Esophagus muscularis mucosa (tissue), 4 donors: ENCODE measurements at regions of chr16 and their contacts with region 1.

Region 1: DNA sequence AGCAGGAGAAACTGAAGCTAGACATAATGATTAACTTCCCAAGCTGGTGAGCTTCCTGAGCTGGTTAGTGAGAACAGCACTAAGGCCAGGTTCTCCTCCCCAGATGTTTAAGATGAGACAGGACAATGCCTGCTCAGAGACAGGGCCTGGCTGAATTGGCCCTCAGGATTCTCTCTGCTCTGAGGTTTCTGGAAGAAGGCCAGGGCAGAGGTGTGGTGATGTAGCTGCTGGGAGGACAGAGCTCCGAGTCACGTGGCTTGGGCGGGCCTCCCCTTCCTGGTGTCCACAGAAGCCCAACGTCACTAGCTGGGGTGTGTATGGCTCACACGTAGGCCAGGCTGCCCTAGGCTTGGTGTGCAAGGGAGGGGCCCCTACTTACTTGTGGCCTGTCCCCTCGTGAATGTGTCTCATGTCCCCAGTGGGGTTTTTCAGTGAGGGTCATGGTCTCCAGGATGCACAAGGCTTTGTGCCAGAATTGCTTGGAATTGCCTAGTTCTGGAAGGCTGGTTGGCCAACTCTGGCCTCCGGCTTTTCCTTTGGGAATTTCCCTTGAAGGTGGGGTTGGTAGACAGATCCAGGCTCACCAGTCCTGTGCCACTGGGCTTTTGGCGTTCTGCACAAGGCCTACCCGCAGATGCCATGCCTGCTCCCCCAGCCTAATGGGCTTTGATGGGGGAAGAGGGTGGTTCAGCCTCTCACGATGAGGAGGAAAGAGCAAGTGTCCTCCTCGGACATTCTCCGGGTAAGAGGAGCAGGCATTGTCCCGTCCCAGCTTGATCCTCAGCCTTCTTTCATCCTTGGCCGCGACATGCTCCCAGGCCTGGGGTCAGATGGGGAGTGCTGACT is 3.4 kb downstream of the NOD2 start:
- DNase-seq: peak; percentile 95
- H3K4me3 ChIP-seq: no peak overlapping the region
- H3K27ac ChIP-seq: peak overlapping the region; percentile 59 to 69 (median 62)
- H3K4me1 ChIP-seq: peaks cover 28 to 46% (median 43%) of the 10 kb centered on the region in 4 donors
- H3K27me3 ChIP-seq: no peaks in the 10 kb centered on the region
- CTCF ChIP-seq: no peak
- EP300 ChIP-seq: no peak
- POLR2A ChIP-seq: no peak

Region 2: DNA sequence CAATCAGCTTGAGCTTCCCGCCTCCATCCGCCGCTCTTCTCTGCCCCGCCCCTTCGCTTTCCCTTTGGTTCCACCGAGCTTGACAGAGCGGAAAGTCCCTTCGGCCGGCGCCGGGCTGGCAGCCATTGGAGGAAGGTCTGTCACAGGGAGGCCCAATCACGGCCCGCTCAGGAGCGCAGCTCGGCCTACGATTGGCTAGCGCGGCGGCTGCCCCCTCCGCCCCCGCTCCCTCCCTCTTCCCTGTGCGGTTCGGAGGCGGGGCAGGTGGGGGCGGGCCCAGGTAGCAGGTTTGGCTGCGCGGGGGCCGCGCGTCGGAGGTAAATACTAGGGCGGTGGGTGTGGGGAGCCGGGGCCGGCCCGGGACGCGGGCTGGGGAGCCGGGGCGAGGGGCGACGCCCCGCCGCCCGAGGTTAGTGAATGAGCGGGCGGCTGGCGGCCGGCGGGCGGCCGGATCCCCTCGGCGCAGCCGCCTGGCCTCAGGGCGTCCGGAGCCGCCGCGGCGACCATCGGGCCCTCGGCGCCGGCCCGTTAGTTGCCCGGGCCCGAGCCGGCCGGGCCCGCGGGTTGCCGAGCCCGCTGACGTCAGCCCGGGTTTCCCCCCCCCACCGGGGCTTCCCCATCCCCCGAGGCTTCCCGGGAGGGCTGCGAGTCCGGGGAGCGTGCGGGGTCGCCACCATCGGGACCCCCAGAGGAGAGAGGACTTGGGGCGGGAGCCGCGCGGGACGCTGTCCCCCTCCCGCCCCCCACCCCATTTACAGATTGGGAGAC is 45.2 kb after region 1 on chr16 and contains the start of gene CYLD:
- intact Hi-C with region 1: loop called (anchors 10 kb)
- DNase-seq: peak; percentile 100
- H3K4me3 ChIP-seq: peak within 1 kb of the TSS; percentile 90 to 99 (median 99)
- H3K27ac ChIP-seq: peak within 1 kb of the TSS; percentile 91 to 96 (median 94)
- H3K4me1 ChIP-seq: peaks cover 19 to 51% (median 47%) of the 10 kb centered on the region in 4 donors
- H3K27me3 ChIP-seq: no peaks in the 10 kb centered on the region
- CTCF ChIP-seq: no peak
- EP300 ChIP-seq: no peak
- POLR2A ChIP-seq: no peak
- total RNA-seq, gene CYLD: 40.1 to 46.4 (median 40.8) TPM

Region 3: GRCh38 chr16:50806099-50807062 is 109.6 kb after region 1 on chr16:
- intact Hi-C with region 1: loop called (anchors 10 kb)
- DNase-seq: no peak
- H3K4me3 ChIP-seq: peak overlapping the region; percentile 37 to 53 (median 41)
- H3K27ac ChIP-seq: peak overlapping the region; percentile 46 to 77 (median 69)
- H3K4me1 ChIP-seq: peaks cover 3 to 29% (median 14%) of the 10 kb centered on the region in 4 donors
- H3K27me3 ChIP-seq: no peaks in the 10 kb centered on the region
- CTCF ChIP-seq: peak; percentile 82 to 94 (median 93)
- EP300 ChIP-seq: no peak
- POLR2A ChIP-seq: no peak

Region 4: DNA sequence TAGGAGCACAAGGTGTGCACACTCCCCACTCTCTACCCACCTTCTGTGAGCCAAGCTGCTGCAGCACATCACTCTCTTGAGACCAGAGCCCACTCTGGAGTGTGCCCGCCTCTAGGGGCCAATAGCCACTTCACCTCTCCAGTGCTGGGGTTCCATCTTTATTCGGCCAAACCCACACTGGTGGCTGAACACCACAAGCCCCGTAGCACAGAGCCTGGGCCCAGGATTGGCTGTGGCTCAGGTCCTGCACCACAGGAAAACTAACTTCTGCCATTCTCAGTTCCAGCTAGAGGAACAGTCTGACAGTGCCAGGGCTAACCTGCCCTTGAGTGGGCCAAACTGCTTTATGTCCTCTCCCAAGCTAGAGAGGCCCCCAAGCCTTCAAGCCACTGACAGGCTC is 1961.1 kb after region 1 on chr16:
- intact Hi-C with region 1: no loop called
- DNase-seq: peak; percentile 68
- H3K4me3 ChIP-seq: no peak overlapping the region
- H3K27ac ChIP-seq: no peak overlapping the region
- H3K4me1 ChIP-seq: no peaks in the 10 kb centered on the region
- H3K27me3 ChIP-seq: no peaks in the 10 kb centered on the region
- CTCF ChIP-seq: no peak
- EP300 ChIP-seq: no peak
- POLR2A ChIP-seq: no peak